Heart left ventricle (tissue), 16 donors: ENCODE measurements at regions of chr11 and their contacts with region 1.

Region 1: GRCh38 chr11:96827164-96827563 is 437.4 kb downstream of the JRKL start:
- DNase-seq: peak in 1 of 5 donors; percentile 10
- ATAC-seq: peak in 3 of 4 donors; percentile 65 to 75 (median 68)
- H3K4me3 ChIP-seq: no peak overlapping the region
- H3K27ac ChIP-seq: no peak overlapping the region
- H3K4me1 ChIP-seq: no peaks in the 10 kb centered on the region
- H3K27me3 ChIP-seq: no peaks in the 10 kb centered on the region
- CTCF ChIP-seq: peak in 10 of 12 donors; percentile 21 to 55 (median 40)
- POLR2A ChIP-seq: no peak

Region 2: GRCh38 chr11:97140885-97141494 is 313.8 kb after region 1 on chr11:
- intact Hi-C with region 1: loop called in 7 of 10 experiments (anchors 5 to 10 kb)
- DNase-seq: no peak
- ATAC-seq: no peak
- H3K4me3 ChIP-seq: no peak overlapping the region
- H3K27ac ChIP-seq: no peak overlapping the region
- H3K4me1 ChIP-seq: no peaks in the 10 kb centered on the region
- H3K27me3 ChIP-seq: no peaks in the 10 kb centered on the region
- CTCF ChIP-seq: peak in 11 of 12 donors; percentile 17 to 66 (median 42)
- POLR2A ChIP-seq: no peak